Heart left ventricle (tissue), 16 donors: ENCODE measurements at regions of chr18 and their contacts with region 1.

Region 1: DNA sequence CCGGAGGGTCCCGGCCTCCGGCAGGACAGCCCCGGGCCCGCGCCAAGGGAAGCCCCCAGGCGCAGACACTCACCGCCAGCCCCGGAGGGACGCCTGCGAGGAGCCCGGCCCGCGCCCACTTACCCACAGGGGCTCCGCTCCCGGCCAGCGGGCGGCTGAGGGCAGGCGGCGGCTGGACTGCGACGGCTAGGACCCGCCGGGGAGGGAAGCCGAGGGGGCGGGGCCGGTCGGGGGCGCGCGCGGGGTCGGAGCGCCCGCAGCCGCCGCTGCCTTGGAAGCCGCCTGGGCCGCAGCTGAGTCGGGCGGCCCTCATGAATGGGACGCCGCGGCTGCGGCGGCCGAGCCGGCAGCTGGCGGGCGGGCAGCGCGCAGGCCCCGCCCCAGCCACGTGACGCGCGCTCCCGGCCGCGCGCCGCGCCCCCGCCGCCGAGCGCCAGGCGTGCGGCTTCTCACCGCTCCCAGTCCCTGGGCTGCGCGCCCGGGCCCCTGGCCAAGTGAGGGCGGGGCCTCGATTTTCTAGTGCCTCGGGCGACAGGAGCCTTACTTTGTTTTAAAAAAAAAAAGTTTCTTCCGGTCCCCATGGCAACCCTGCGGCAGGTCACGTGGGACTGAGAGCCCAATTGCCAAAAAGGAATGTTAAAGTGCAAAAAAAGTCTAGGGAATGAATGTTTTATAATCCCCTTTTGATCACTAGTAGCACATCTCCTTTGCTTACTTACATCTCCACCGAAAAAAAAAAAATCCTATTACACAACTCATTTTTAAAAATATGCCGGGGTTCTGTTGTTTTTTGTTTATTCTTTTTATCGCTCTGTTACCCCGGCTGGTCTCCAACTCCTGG is at the start of gene LPIN2:
- DNase-seq: peak; percentile 98 to 99 (median 99)
- ATAC-seq: peak; percentile 86 to 93 (median 91)
- H3K4me3 ChIP-seq: peak within 1 kb of the TSS; percentile 69 to 100 (median 90)
- H3K27ac ChIP-seq: peak within 1 kb of the TSS; percentile 82 to 97 (median 94)
- H3K4me1 ChIP-seq: peaks cover 0 to 87% (median 28%) of the 10 kb centered on the region in 12 donors
- H3K27me3 ChIP-seq: no peaks in the 10 kb centered on the region
- CTCF ChIP-seq: no peak
- POLR2A ChIP-seq: peak in 1 of 2 donors; percentile 63
- total RNA-seq, gene LPIN2: 6.1 to 21.6 (median 10.9) TPM

Region 2: GRCh38 chr18:2818281-2818680 is 194.9 kb before region 1 on chr18:
- intact Hi-C with region 1: no loop called
- DNase-seq: no peak
- ATAC-seq: no peak
- H3K4me3 ChIP-seq: no peak overlapping the region
- H3K27ac ChIP-seq: no peak overlapping the region
- H3K4me1 ChIP-seq: no peaks in the 10 kb centered on the region
- H3K27me3 ChIP-seq: no peaks in the 10 kb centered on the region
- CTCF ChIP-seq: no peak
- POLR2A ChIP-seq: no peak

Region 3: GRCh38 chr18:2958819-2959298 is 54.3 kb before region 1 on chr18:
- intact Hi-C with region 1: loop called in 1 of 10 experiments (anchors 10 kb)
- DNase-seq: no peak
- ATAC-seq: peak in 3 of 4 donors; percentile 51 to 63 (median 54)
- H3K4me3 ChIP-seq: peak overlapping the region in 1 of 12 donors; percentile 12
- H3K27ac ChIP-seq: peak overlapping the region in 11 of 12 donors; percentile 1 to 95 (median 45)
- H3K4me1 ChIP-seq: peaks cover 5 to 80% (median 32%) of the 10 kb centered on the region in 12 donors
- H3K27me3 ChIP-seq: no peaks in the 10 kb centered on the region
- CTCF ChIP-seq: no peak
- POLR2A ChIP-seq: no peak

Region 4: GRCh38 chr18:2978646-2979045 is 34.5 kb before region 1 on chr18:
- intact Hi-C with region 1: loop called in 1 of 10 experiments (anchors 5 kb)
- DNase-seq: no peak
- ATAC-seq: peak in 3 of 4 donors; percentile 31 to 50 (median 33)
- H3K4me3 ChIP-seq: peak overlapping the region in 4 of 12 donors; percentile 13 to 35 (median 24)
- H3K27ac ChIP-seq: peak overlapping the region in 10 of 12 donors; percentile 4 to 90 (median 46)
- H3K4me1 ChIP-seq: peaks cover 6 to 92% (median 53%) of the 10 kb centered on the region in 12 donors
- H3K27me3 ChIP-seq: no peaks in the 10 kb centered on the region
- CTCF ChIP-seq: no peak
- POLR2A ChIP-seq: no peak

Region 5: DNA sequence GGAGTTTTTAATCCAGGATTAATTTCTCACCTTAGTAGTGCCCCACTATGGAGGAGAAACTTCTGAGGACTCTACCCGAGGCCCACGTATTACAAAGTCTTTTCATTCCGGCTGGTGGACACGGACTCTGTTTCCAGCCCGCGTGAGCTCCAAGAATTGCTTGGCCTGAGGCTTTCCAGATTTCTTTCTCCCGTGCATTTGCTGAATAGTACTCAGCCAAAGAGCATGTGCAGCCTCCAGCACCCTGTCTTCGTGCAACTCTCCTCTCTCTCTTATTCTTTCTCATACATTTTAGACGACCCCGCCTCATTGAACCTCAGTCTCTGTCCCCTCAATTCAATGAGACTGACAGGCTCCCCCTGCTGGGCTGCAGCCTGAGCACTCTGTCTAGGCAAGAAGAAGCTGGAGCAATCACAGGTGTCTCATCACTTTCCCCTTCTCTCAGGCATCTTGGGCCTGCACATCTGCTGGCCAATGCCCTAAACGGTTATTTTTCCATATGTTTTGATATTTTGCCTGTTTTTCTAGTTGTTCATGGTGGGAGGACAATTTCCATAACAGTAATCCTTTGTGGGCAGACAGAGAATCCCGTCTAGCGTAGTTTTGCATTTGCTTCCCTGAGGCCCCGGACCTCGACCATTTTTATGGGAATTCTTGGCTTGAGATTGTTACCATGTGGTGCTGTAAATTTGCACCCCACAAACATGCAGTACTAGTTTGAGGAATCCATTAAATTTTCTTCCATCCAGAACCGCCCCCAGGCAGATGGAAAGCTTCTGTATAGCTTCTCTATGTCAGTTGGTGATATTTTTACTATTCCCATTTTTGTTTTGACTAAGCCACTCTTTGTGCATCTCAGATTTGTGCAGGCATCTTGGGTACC is 49.9 kb after region 1 on chr18:
- intact Hi-C with region 1: loop called in 7 of 10 experiments (anchors 1 to 10 kb)
- DNase-seq: peak; percentile 61 to 83 (median 67)
- ATAC-seq: peak; percentile 59 to 71 (median 68)
- H3K4me3 ChIP-seq: peak overlapping the region in 1 of 12 donors; percentile 13
- H3K27ac ChIP-seq: peak overlapping the region in 1 of 12 donors; percentile 84
- H3K4me1 ChIP-seq: peaks cover 0 to 39% (median 13%) of the 10 kb centered on the region in 12 donors
- H3K27me3 ChIP-seq: no peaks in the 10 kb centered on the region
- CTCF ChIP-seq: peak; percentile 58 to 82 (median 72)
- POLR2A ChIP-seq: no peak

Region 6: GRCh38 chr18:3261371-3262246 is 248.4 kb after region 1 on chr18 and contains the start of gene MYL12B:
- intact Hi-C with region 1: loop called in 1 of 10 experiments (anchors 10 kb)
- DNase-seq: peak; percentile 86 to 92 (median 87)
- ATAC-seq: peak; percentile 36 to 94 (median 74)
- H3K4me3 ChIP-seq: peak within 1 kb of the TSS; percentile 68 to 96 (median 88)
- H3K27ac ChIP-seq: peak within 1 kb of the TSS; percentile 95 to 100 (median 97)
- H3K4me1 ChIP-seq: peaks cover 12 to 86% (median 48%) of the 10 kb centered on the region in 12 donors
- H3K27me3 ChIP-seq: no peaks in the 10 kb centered on the region
- CTCF ChIP-seq: peak in 2 of 12 donors; percentile 17 to 18
- POLR2A ChIP-seq: peak in 1 of 2 donors; percentile 46
- total RNA-seq, gene MYL12B: 185 to 292 (median 210) TPM

Region 7: GRCh38 chr18:3321133-3321812 is 308.1 kb after region 1 on chr18:
- intact Hi-C with region 1: no loop called
- DNase-seq: no peak
- ATAC-seq: no peak
- H3K4me3 ChIP-seq: no peak overlapping the region
- H3K27ac ChIP-seq: no peak overlapping the region
- H3K4me1 ChIP-seq: peaks cover 0 to 11% (median 0%) of the 10 kb centered on the region in 12 donors
- H3K27me3 ChIP-seq: no peaks in the 10 kb centered on the region
- CTCF ChIP-seq: no peak
- POLR2A ChIP-seq: no peak

Region 8: DNA sequence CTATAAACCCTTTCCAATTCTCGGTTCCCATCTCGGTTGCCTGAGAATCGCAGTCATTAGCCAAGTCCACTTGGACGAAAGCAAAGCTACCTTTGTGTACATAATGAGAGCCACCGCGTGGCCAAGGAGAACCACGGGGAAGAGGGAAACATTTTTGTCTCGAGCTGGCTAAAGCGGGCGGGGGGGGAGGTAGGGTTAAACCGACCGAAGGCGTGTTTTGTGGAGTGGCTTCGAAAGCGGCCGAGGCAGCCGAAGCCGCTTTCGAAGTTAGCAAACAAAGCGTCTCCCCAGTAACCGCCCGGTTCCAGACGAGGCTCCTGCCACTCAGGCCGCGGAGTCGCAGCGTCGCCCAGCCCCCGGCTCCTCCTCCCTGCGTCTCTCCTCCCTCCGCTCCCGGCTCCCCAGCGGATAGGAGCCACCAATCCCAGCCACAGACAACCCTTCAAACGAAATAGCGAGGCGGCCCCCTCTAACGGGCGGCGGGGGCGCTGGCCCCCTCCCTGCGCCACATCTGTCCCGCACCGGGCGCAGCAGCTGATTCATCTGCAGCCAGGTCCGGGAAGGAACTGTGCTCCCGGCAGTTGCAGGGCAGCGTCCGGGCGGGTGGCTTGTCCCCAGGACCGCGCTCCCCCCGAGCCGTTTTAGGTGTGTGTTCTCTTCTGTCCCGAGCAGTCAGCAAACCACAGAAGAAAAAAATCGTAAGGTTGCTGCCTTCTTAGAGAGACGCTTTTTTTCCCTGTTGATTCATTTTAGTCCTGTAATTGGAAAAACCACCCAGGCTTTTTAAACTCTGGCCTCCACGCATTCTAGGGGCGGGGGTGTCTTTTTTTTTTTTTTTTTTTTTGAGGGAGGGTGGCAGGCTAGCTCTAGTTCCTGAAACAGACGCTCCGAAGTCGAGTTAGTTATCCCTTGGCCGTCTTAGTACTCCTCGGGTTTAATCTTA is 435.0 kb after region 1 on chr18:
- intact Hi-C with region 1: loop called in 1 of 10 experiments (anchors 5 kb)
- DNase-seq: peak; percentile 94 to 96 (median 96)
- ATAC-seq: peak; percentile 86 to 92 (median 87)
- H3K4me3 ChIP-seq: peak overlapping the region; percentile 65 to 93 (median 78)
- H3K27ac ChIP-seq: peak overlapping the region; percentile 92 to 100 (median 97)
- H3K4me1 ChIP-seq: peaks cover 0 to 27% (median 13%) of the 10 kb centered on the region in 12 donors
- H3K27me3 ChIP-seq: no peaks in the 10 kb centered on the region
- CTCF ChIP-seq: peak in 4 of 12 donors; percentile 3 to 31 (median 20)
- POLR2A ChIP-seq: peak in 1 of 2 donors; percentile 91